Mucosa of descending colon (tissue), 3 donors: ENCODE measurements at regions of chr14 and their contacts with region 1.

Region 1: DNA sequence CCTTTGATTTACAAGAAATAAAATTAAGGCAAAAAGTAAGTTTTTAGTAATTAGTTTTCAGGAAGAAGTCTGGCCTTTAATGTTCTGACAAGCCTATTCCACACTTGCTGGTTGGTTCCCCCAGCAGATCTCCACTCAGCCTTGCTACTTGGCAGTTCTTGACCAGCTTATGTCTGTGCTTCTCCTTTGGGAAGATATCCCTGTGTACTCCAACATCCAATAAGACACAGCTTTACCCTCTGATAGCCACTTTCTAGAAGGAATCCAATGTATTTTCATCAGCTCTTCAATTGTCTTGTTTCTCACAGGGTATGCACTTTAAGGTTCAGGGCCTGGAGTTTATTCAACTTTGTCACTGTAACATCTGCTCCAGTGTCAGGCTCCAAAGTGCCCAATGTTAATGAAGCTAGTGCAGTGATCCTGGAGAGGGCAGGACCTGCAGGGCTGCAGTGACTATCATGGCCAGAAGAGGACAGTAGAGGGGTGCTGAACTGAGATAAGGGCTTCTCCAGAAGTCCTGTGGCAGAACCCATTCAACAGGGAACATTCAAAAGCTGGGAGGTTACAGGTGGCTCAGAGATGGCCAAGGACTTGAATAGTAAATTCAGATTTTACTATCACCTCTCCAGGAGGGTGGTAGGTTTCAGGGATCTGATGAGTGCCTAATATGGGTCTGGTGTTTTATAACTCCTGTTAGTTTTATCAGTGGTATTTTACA is 22.9 kb downstream of the JKAMP start:
- DNase-seq: peak in 2 of 3 donors; percentile 79 to 88
- ATAC-seq: peak; percentile 96
- H3K4me3 ChIP-seq: no peak overlapping the region
- H3K4me1 ChIP-seq: peaks cover 8% of the 10 kb centered on the region
- CTCF ChIP-seq: peak; percentile 88

Region 2: DNA sequence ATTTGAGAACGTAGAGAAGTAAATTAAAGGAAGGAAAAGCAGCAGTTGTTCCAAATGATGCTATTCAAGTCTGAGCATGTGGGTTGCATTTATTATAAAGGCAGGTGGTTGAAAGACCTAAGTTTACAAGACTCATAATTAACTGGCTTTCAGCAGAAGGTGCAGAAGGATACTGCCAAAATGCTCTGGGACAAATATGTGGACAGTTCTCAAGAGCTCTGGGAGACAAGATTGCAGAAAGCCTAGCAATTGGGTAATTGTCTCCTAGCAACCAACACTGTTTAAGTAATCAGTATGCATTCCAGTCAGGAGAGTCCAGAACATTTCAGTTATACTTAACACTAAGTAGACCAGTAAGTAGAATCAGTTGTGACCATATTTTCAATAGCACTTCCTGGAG is 173.6 kb before region 1 on chr14:
- intact Hi-C with region 1: no loop called
- DNase-seq: peak in 1 of 3 donors; percentile 10
- ATAC-seq: peak; percentile 70
- H3K4me3 ChIP-seq: no peak overlapping the region
- H3K4me1 ChIP-seq: no peaks in the 10 kb centered on the region
- CTCF ChIP-seq: no peak

Region 3: DNA sequence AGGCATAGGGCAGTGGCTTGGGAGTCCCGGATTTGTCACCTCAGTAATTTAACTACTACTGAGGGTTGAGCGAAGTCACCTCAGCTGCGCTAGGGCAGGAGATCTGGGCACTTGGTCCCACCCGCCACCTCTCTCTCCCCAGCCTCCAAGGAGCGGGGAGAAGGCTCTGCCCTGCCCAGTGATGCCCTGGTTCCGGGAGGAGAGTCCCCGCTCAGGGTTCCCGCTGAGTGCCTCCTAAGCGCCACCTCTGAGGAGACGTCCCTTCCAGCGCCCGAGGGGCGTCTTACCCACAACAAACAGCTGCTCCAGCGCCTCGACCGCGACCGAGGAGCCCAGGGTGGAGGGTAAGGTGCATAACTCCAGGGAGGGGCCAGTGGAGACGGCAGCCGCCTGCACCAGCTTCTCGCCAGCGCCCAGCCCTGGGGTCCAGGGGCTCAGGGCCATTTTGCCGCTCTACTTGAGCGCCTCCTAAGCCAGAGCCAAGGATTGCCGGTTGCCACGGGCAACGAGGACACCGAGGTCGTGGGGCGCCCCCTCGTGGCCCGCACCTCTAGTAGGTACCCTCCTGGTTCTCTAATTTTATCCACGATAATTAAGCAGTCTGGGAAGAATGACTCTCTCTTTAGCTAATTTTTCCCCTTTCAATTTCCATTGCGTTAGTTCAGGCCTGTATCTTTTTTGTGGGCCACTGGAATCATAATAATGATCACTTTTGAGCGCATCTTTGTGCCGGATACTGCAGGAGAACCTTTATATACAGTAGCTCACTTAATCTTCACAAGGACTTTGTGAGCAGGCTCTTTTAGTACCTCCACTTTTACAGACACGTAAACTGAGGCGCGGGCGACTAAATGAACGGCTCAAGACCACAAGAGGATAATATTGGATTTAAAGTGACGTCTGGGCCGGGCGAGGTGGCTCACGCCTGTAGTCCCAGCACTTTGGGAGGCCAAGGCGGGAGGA is 69.4 kb after region 1 on chr14 and contains the start of gene CCDC175:
- intact Hi-C with region 1: loop called in 1 of 2 experiments (anchors 2 kb)
- DNase-seq: peak; percentile 88 to 95 (median 92)
- ATAC-seq: peak; percentile 100
- H3K4me3 ChIP-seq: peak within 1 kb of the TSS; percentile 12
- H3K4me1 ChIP-seq: no peaks in the 10 kb centered on the region
- CTCF ChIP-seq: peak; percentile 72
- total RNA-seq, gene CCDC175: 0.09 to 1.6 (median 0.60) TPM